GM12878 (cell line): ENCODE measurements at regions of chr5 and their contacts with region 1.

Region 1: DNA sequence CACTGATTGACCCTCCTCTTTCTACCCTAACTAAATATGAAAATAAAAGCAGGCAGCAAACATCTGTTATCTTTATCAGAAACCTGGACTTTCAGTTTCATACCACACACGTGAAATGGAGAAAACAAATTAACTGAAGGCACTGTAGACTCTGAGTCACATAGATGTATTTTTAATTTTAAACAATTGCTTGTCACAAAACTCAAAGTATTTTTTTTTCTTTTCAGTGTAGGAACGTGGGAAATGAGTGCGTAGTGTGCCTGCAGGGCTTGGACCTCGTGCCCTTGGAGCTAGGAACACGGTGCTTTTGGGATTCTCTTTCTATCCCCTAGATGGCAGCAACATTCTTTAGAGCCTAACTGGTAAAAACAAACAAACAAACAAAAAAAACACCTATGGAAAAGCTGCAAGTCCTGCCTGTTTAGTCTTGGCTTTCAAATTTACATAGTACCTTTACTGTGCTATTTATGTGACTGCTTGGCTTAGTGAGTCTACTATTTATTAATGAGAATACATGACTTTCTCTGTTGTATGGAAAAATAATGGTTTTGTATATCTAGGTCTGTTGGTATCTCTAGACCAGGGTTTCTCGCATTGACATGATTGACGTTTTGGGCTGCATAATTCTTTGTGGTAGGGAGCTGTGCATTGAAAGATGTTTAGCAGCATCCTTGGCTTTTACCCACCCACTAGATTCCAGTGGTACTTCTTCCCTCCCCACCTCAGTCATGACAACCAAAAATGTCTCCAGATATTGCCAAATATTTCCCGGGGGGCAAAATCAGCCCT is 16.8 kb upstream of the ACTBL2 start:
- DNase-seq: peak; percentile 44
- ATAC-seq: peak; percentile 91
- H3K4me3 ChIP-seq: peak overlapping the region; percentile 42; the same call in 1 of the 2 replicates
- H3K27ac ChIP-seq: no peak overlapping the region
- H3K4me1 ChIP-seq: peaks cover 11% of the 10 kb centered on the region
- H3K27me3 ChIP-seq: no peaks in the 10 kb centered on the region; a peak in 1 of 4 replicates
- CTCF ChIP-seq: peak; percentile 64 to 78 (median 67)
- EP300 ChIP-seq: no peak
- POLR2A ChIP-seq: no peak
- RAD21 ChIP-seq: peak; percentile 79

Region 2: GRCh38 chr5:57298295-57298984 is 201.0 kb before region 1 on chr5:
- CTCF ChIA-PET with region 1: interaction called, 36 read pairs
- POLR2A ChIA-PET with region 1: no interaction called
- RAD21 ChIA-PET with region 1: interaction called, 9 read pairs
- SMC1A ChIA-PET with region 1: interaction called, 12 read pairs
- in situ Hi-C with region 1: no loop called
- intact Hi-C with region 1: loop called (anchors 2 kb)
- DNase-seq: peak; percentile 34
- ATAC-seq: peak; percentile 94
- H3K4me3 ChIP-seq: 0 out of 2 replicates have a peak overlapping the region, but pooled peaks have one; percentile 18
- H3K27ac ChIP-seq: no peak overlapping the region
- H3K4me1 ChIP-seq: peaks cover 6% of the 10 kb centered on the region
- H3K27me3 ChIP-seq: no peaks in the 10 kb centered on the region
- CTCF ChIP-seq: peak; percentile 75 to 81 (median 76)
- EP300 ChIP-seq: no peak
- POLR2A ChIP-seq: no peak
- RAD21 ChIP-seq: peak; percentile 72

Region 3: GRCh38 chr5:57422993-57423392 is 76.5 kb before region 1 on chr5:
- CTCF ChIA-PET with region 1: no interaction called
- POLR2A ChIA-PET with region 1: no interaction called
- RAD21 ChIA-PET with region 1: no interaction called
- SMC1A ChIA-PET with region 1: no interaction called
- in situ Hi-C with region 1: no loop called
- intact Hi-C with region 1: no loop called
- DNase-seq: no peak
- ATAC-seq: no peak
- H3K4me3 ChIP-seq: no peak overlapping the region
- H3K27ac ChIP-seq: no peak overlapping the region
- H3K4me1 ChIP-seq: no peaks in the 10 kb centered on the region
- H3K27me3 ChIP-seq: no peaks in the 10 kb centered on the region; a peak in 1 of 4 replicates
- CTCF ChIP-seq: no peak
- EP300 ChIP-seq: no peak
- POLR2A ChIP-seq: no peak
- RAD21 ChIP-seq: no peak

Region 4: DNA sequence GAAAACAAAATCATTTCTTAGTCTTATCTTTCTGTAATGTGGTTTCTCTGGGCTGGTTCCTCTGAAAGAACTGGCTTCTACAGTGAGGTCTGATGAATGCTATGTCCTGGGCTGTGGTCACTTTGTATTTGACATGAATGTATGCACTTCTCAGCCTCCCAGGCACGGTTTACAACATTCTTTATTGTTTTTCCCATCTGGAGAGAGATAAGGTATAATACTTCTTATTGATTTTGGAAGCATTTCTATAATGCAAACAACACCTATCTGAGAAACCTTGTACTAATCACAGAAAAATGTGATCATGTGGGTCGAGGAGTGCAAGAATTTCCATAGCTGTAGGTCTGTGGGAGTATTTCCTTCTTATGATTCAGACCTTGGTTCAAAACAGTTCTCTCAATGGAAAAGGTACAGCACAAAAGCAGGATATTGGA is 63.7 kb before region 1 on chr5:
- CTCF ChIA-PET with region 1: no interaction called
- POLR2A ChIA-PET with region 1: no interaction called
- RAD21 ChIA-PET with region 1: no interaction called
- SMC1A ChIA-PET with region 1: no interaction called
- in situ Hi-C with region 1: no loop called
- intact Hi-C with region 1: loop called (anchors 10 kb)
- DNase-seq: no peak
- ATAC-seq: no peak
- H3K4me3 ChIP-seq: no peak overlapping the region
- H3K27ac ChIP-seq: no peak overlapping the region
- H3K4me1 ChIP-seq: no peaks in the 10 kb centered on the region
- H3K27me3 ChIP-seq: peaks cover 1 to 5% of the 10 kb centered on the region in 2 experiments; a peak in 1 of 4 replicates
- CTCF ChIP-seq: no peak
- EP300 ChIP-seq: no peak
- POLR2A ChIP-seq: no peak
- RAD21 ChIP-seq: no peak

Region 5: DNA sequence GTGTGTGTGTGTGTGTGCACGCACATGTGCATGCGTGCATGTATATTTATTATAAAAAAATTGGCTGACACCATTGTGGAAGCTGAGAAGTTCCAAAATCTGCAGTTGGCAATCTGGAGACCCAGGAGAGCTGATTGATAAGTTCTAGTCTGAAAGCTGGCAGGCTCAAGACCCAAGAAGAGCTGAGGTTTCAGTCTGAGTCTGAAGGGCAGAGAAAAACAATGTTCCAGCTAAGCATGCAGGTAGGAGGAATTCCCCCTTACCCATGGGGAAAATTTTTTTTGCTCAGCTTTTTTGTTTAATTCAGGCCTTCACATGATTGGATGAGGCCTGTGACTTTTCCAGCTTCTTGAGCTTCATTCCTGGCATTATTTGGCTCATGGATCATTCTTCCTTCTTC is 14.3 kb after region 1 on chr5:
- CTCF ChIA-PET with region 1: interaction called, 13 read pairs
- POLR2A ChIA-PET with region 1: no interaction called
- RAD21 ChIA-PET with region 1: interaction called, 3 read pairs
- SMC1A ChIA-PET with region 1: interaction called, 12 read pairs
- in situ Hi-C with region 1: no loop called
- intact Hi-C with region 1: no loop called
- DNase-seq: no peak
- ATAC-seq: peak; percentile 52; the same call in 2 of the 3 replicates
- H3K4me3 ChIP-seq: no peak overlapping the region
- H3K27ac ChIP-seq: no peak overlapping the region
- H3K4me1 ChIP-seq: no peaks in the 10 kb centered on the region
- H3K27me3 ChIP-seq: no peaks in the 10 kb centered on the region
- CTCF ChIP-seq: no peak
- EP300 ChIP-seq: no peak
- POLR2A ChIP-seq: no peak
- RAD21 ChIP-seq: no peak

Region 6: GRCh38 chr5:57650360-57651069 is 151.1 kb after region 1 on chr5:
- CTCF ChIA-PET with region 1: interaction called, 16 read pairs
- POLR2A ChIA-PET with region 1: no interaction called
- RAD21 ChIA-PET with region 1: interaction called, 13 read pairs
- SMC1A ChIA-PET with region 1: interaction called, 10 read pairs
- in situ Hi-C with region 1: no loop called
- intact Hi-C with region 1: no loop called
- DNase-seq: peak; percentile 16
- ATAC-seq: peak; percentile 93
- H3K4me3 ChIP-seq: no peak overlapping the region
- H3K27ac ChIP-seq: no peak overlapping the region
- H3K4me1 ChIP-seq: no peaks in the 10 kb centered on the region
- H3K27me3 ChIP-seq: no peaks in the 10 kb centered on the region
- CTCF ChIP-seq: peak; percentile 71 to 77 (median 75)
- EP300 ChIP-seq: no peak
- POLR2A ChIP-seq: no peak
- RAD21 ChIP-seq: peak; percentile 59

Region 7: GRCh38 chr5:57698769-57699168 is 199.3 kb after region 1 on chr5:
- CTCF ChIA-PET with region 1: interaction called, 6 read pairs
- POLR2A ChIA-PET with region 1: no interaction called
- RAD21 ChIA-PET with region 1: no interaction called
- SMC1A ChIA-PET with region 1: no interaction called
- in situ Hi-C with region 1: no loop called
- intact Hi-C with region 1: loop called (anchors 5 kb)
- DNase-seq: no peak
- ATAC-seq: no peak
- H3K4me3 ChIP-seq: no peak overlapping the region
- H3K27ac ChIP-seq: no peak overlapping the region
- H3K4me1 ChIP-seq: no peaks in the 10 kb centered on the region
- H3K27me3 ChIP-seq: no peaks in the 10 kb centered on the region
- CTCF ChIP-seq: no peak
- EP300 ChIP-seq: no peak
- POLR2A ChIP-seq: no peak
- RAD21 ChIP-seq: no peak

Region 8: GRCh38 chr5:57779383-57780223 is 280.1 kb after region 1 on chr5:
- CTCF ChIA-PET with region 1: interaction called, 14 read pairs
- POLR2A ChIA-PET with region 1: no interaction called
- RAD21 ChIA-PET with region 1: interaction called, 5 read pairs
- SMC1A ChIA-PET with region 1: interaction called, 19 read pairs
- in situ Hi-C with region 1: no loop called
- intact Hi-C with region 1: loop called (anchors 5 kb)
- DNase-seq: no peak
- ATAC-seq: peak; percentile 83
- H3K4me3 ChIP-seq: no peak overlapping the region
- H3K27ac ChIP-seq: no peak overlapping the region
- H3K4me1 ChIP-seq: no peaks in the 10 kb centered on the region
- H3K27me3 ChIP-seq: peaks cover 0 to 2% of the 10 kb centered on the region in 2 experiments; a peak in 1 of 4 replicates
- CTCF ChIP-seq: peak; percentile 40 to 55 (median 45); a peak in 5 of 6 replicates
- EP300 ChIP-seq: no peak
- POLR2A ChIP-seq: no peak
- RAD21 ChIP-seq: peak; percentile 73